Left ventricle myocardium superior (tissue), 1 donor: ENCODE measurements at regions of chr9 and their contacts with region 1.

Region 1: GRCh38 chr9:34437006-34437925 is 21.1 kb downstream of the FAM219A start:
- DNase-seq: no peak
- ATAC-seq: peak; percentile 87

Region 2: GRCh38 chr9:34500623-34501267 is 63.5 kb after region 1 on chr9:
- intact Hi-C with region 1: loop called (anchors 5 kb)
- DNase-seq: peak; percentile 40
- ATAC-seq: peak; percentile 62

Region 3: DNA sequence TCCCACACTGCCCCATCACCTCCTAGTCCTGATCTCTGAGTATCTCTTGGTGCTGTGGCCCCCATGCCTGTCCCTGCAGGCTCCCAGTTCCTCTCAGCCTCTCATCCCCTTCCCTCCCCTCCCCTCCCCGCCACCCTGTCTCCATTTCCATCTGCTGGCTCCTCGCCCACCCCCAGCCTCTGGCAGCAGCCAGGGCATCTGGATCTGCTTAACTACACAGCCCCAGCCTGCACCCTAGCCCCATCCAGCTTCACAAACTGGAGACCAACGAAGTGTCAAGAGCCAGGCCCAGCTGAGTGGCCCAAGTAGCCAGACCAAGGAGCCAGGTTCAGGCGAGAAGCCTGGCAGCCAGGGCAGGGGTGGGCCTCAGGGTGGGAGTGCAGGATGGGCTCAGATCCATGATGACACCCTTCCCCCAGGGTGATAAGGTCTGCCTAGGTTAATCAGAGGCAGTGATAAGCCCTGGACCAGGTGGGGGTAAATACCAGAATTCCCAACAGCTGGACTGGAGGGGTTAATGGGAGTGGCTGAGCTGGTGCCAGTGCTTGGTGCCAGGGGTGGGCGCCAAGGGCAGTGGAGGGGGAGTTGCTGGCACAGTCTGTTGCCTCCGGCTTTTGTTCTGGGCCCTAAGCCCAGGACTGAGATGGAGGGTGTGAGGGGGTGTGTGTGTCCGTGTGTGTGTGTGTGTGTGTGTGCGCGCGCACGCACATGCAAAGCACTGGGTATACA is 217.2 kb after region 1 on chr9:
- intact Hi-C with region 1: no loop called
- DNase-seq: peak; percentile 86
- ATAC-seq: peak; percentile 69